RWPE1 (cell line): ENCODE measurements at regions of chr2 and their contacts with region 1.

Region 1: GRCh38 chr2:148981324-148981723 is 57.2 kb upstream of the LYPD6B start:
- DNase-seq: no peak
- H3K27ac ChIP-seq: no peak overlapping the region
- CTCF ChIP-seq: no peak

Region 2: DNA sequence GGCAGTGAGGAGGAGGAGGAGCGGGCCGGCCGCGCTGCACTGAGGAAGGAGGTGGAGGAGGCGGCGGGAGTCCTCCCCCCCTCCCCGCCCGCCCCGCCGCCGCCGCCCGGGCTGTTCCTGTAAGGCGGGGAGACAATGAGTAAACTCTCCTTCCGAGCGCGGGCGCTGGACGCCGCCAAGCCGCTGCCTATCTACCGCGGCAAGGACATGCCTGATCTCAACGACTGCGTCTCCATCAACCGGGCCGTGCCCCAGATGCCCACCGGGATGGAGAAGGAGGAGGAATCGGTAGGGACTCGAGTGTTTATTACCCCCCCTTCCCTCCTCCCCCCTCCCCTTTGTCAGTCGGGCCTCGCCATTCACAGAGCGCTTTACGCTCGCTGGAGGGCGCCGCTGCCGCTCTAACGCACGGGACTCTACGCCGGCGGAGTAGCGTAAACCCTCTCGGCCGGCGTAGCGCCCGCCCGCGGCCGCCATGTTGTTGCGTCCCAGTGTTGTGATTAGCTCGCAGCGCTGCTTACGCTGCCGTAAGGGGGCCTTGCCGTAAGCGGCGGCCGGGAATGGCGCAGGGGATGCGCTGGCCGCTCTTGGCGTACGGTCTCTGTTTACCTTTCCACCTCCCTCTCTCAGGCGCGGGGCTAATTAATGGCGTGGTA is 336.3 kb before region 1 on chr2:
- CTCF ChIA-PET with region 1: no interaction called
- POLR2A ChIA-PET with region 1: interaction called, 12 read pairs
- DNase-seq: peak; percentile 91
- H3K27ac ChIP-seq: peak overlapping the region; percentile 96
- CTCF ChIP-seq: no peak